ENCODE measurements at regions of chr10 and their contacts with region 1.

Region 1: GRCh38 chr10:31011017-31011659 is 20.5 kb downstream of the ZNF438 start:
- DNase-seq: no peak
- H3K4me3 Mint-ChIP-seq: no peak overlapping the region
- H3K27ac Mint-ChIP-seq: no peak overlapping the region
- H3K4me1 Mint-ChIP-seq: peaks cover 6% of the 10 kb centered on the region
- H3K27me3 Mint-ChIP-seq: no peaks in the 10 kb centered on the region

Region 2: GRCh38 chr10:31031558-31032257 is 20.6 kb after region 1 on chr10 and contains the start of gene ZNF438:
- CTCF ChIA-PET with region 1: interaction called, 10 read pairs
- POLR2A ChIA-PET with region 1: no interaction called
- DNase-seq: peak; percentile 91
- H3K4me3 Mint-ChIP-seq: peak within 1 kb of the TSS; percentile 80
- H3K27ac Mint-ChIP-seq: peak within 1 kb of the TSS; percentile 99
- H3K4me1 Mint-ChIP-seq: peaks cover 26% of the 10 kb centered on the region
- H3K27me3 Mint-ChIP-seq: no peaks in the 10 kb centered on the region
- total RNA-seq, gene ZNF438: 3.1 to 3.8 TPM